Sigmoid colon (tissue), 7 donors: ENCODE measurements at regions of chr5 and their contacts with region 1.

Region 1: DNA sequence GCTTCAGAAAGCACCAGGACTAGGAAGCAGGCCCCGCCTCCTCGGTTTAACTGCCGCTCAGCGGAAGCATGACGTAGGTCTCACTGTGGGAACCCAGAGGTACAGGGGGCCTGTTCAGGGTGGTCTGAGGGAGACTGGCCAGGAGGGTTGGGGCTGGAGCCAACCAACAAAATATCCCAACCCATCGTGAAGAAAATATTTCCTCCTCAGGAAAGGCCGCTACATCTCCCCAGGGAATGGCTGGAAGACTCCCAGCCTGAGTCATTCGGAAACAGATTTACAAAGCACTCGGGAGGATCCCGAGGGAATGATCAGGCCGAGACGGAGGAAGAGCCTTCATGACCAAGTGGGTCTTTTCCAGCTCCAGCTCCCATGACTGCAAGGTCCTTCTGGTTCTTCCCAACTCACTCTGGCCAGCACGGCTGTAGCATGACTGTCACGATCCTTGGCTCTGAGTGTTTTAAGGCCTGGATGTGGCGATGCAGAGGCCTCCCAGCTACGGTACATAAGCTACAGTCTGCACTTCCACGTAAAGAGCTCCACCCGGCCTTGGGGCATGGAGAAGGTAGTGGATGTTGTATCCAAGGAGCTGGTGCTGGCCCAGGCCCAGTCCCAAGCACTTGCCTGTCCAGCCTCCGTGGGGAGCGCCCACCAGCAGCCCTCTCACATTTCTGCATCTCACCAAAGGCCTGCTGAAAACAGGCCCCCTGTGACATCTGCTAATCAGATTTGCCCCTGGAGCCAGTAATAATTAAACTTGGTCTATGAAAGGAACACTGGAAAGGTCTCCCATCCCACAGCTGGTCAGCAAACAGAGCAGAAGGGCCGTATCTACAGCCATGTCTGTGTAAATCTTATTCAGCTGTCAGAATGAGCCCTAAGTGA is 100.6 kb downstream of the LHFPL2 start:
- DNase-seq: peak; percentile 96
- H3K4me3 ChIP-seq: no peak overlapping the region
- H3K27ac ChIP-seq: peak overlapping the region; percentile 65 to 77 (median 74)
- H3K4me1 ChIP-seq: peaks cover 0 to 52% (median 33%) of the 10 kb centered on the region in 4 donors
- H3K27me3 ChIP-seq: no peaks in the 10 kb centered on the region
- CTCF ChIP-seq: no peak
- EP300 ChIP-seq: peak in 1 of 4 donors; percentile 36
- POLR2A ChIP-seq: no peak

Region 2: GRCh38 chr5:78677777-78678668 is 130.1 kb after region 1 on chr5:
- intact Hi-C with region 1: no loop called
- DNase-seq: peak; percentile 88
- H3K4me3 ChIP-seq: no peak overlapping the region
- H3K27ac ChIP-seq: peak overlapping the region; percentile 13 to 57 (median 39)
- H3K4me1 ChIP-seq: peaks cover 0 to 13% (median 5%) of the 10 kb centered on the region in 4 donors
- H3K27me3 ChIP-seq: no peaks in the 10 kb centered on the region
- CTCF ChIP-seq: no peak
- EP300 ChIP-seq: peak in 1 of 4 donors; percentile 19
- POLR2A ChIP-seq: no peak

Region 3: GRCh38 chr5:78760770-78761169 is 212.8 kb after region 1 on chr5:
- intact Hi-C with region 1: loop called (anchors 10 kb)
- DNase-seq: no peak
- H3K4me3 ChIP-seq: no peak overlapping the region
- H3K27ac ChIP-seq: no peak overlapping the region
- H3K4me1 ChIP-seq: peaks cover 0 to 27% (median 13%) of the 10 kb centered on the region in 4 donors
- H3K27me3 ChIP-seq: no peaks in the 10 kb centered on the region
- CTCF ChIP-seq: no peak
- EP300 ChIP-seq: no peak
- POLR2A ChIP-seq: no peak